Endothelial cell of umbilical vein (primary cell): ENCODE measurements at regions of chr20 and their contacts with region 1.

Region 1: DNA sequence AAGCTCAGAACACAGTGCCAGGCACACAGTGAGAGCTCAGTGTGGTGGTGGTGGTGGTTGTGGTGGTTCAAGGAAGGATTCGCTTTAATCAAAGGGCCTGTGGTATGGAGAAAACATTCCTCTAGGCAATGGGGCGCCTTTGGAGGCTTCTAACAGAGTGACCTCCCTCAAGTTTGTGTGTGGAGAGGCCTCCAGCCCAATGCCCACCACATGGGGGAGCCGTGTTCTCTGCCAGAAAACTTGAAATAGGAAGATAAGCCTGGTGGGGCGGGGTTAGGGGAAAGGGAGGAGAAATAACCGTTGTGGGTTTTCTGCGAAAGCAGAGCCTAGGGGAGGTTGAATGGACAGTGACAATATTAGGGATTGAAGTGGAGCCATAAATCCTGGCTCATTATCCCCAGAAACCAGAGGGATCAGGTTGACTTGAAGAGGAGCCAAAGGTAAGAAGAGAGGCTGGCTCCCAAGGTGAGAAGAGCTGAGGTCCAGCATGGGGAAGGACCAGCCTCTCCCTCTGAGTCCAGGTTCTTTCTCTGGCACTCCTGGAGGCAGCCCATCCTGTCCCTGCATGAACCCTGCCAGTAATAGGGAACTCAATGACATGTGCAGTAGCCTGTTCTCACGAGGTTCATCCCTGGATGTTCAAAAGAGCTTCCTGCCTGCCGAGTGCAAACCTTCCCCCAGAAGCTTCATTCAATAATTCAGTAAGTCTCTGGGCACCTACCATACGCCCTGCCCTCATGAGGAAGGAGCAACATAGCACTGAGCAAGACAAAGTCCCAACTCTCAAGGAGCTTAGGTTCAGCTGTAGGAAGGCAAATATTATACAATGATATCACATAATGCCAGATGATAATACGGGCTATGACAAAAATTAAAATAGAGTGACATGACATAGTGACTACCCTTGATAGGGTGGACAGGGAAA is 51.4 kb downstream of the TGM2 start:
- DNase-seq: no peak
- H3K4me3 ChIP-seq: no peak overlapping the region
- H3K27ac ChIP-seq: peak overlapping the region; percentile 10
- H3K4me1 ChIP-seq: peaks cover 61% of the 10 kb centered on the region
- H3K27me3 ChIP-seq: no peaks in the 10 kb centered on the region
- CTCF ChIP-seq: peak; percentile 27 to 50
- POLR2A ChIP-seq: no peak

Region 2: DNA sequence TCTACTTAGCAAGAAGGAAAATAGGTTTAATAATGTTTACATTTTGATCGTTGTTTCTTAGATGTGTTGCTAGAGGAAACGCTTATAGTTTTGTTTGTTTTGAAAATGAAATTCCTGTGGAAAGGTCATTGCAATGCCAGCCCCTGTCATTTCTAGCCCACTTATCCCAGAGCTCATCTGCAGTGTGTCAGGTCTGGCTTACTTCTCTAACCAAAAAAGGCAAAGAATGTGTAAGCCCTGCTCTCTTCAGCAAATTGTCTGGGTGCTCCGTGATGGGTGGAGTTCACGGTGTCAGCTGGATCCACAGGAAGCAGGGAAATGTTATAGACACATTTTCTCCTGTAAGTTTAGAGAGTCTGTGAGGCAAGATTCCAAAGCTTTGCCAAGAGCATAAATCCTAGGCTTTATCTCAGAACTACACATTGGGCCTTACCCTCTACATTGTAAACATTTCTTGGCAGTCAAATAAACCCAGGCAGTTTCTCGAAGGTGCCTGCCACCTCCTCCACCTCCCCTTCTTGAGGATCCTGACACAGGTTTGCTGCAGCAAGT is 29.2 kb before region 1 on chr20:
- CTCF ChIA-PET with region 1: interaction called, 10 read pairs
- POLR2A ChIA-PET with region 1: interaction called, 6 read pairs
- dilution Hi-C with region 1: no loop called
- intact Hi-C with region 1: loop called (anchors 2 kb)
- DNase-seq: peak; percentile 91
- H3K4me3 ChIP-seq: no peak overlapping the region
- H3K27ac ChIP-seq: peak overlapping the region; percentile 63
- H3K4me1 ChIP-seq: peaks cover 21% of the 10 kb centered on the region
- H3K27me3 ChIP-seq: no peaks in the 10 kb centered on the region
- CTCF ChIP-seq: no peak
- POLR2A ChIP-seq: no peak

Region 3: DNA sequence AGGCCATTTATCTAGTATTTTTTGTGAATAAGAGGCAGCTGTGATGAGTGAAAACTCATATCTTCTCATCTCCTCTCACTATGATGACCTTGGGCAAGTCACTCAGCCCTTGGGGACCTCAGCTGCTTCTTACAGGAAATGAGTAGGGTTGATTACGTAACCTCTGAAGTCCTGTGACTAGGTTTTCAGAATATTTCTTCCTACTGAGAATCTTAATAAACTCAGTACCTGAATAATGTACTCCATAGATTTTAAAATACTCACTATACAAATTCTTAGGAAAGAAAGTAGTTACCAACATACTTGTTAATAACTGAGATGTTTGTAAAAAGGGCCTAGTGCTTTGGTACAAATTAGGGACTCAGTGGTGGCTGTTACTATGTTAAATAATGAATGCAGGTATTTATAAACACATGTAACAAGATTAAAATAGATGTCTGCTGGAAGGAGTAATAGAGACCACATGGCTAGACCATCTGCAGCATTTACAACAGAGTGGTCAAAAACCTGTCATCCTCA is 19.2 kb before region 1 on chr20:
- CTCF ChIA-PET with region 1: interaction called, 11 read pairs
- POLR2A ChIA-PET with region 1: interaction called, 7 read pairs
- dilution Hi-C with region 1: no loop called
- intact Hi-C with region 1: no loop called
- DNase-seq: peak; percentile 72
- H3K4me3 ChIP-seq: no peak overlapping the region
- H3K27ac ChIP-seq: peak overlapping the region; percentile 74
- H3K4me1 ChIP-seq: peaks cover 44% of the 10 kb centered on the region
- H3K27me3 ChIP-seq: no peaks in the 10 kb centered on the region
- CTCF ChIP-seq: no peak
- POLR2A ChIP-seq: no peak

Region 4: DNA sequence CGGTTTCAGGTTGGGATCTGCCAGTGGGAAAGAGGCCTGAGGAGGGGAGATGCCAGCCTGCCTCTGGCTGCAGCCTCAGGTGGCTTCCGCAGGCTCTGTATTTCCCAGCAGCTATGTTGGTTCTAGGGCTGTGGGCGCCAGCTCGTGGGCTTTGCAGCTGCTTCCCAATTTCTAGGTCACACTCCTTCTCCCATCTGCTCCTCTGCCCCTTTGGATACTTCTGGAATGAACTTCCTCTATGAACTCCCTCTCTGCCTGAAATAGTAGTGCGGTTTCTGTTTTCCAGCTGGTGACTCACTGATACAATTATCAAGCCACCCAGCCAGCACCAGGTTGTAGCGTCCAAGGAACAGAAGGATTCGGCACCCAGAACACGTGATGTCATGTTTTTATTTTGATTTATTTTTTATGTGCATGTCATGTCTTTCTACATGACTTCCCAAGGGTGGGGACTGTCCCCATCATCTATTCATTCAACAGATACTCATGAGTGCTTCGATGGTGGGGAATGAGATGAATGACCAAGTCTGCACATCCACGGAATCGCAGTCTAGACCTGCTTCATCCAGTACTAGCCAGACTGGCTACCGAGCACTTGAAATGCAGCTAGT is 13.5 kb after region 1 on chr20:
- CTCF ChIA-PET with region 1: interaction called, 24 read pairs
- POLR2A ChIA-PET with region 1: no interaction called
- dilution Hi-C with region 1: no loop called
- intact Hi-C with region 1: loop called (anchors 1 kb)
- DNase-seq: peak; percentile 96
- H3K4me3 ChIP-seq: no peak overlapping the region
- H3K27ac ChIP-seq: peak overlapping the region; percentile 60
- H3K4me1 ChIP-seq: peaks cover 52% of the 10 kb centered on the region
- H3K27me3 ChIP-seq: no peaks in the 10 kb centered on the region
- CTCF ChIP-seq: no peak
- POLR2A ChIP-seq: peak; percentile 40

Region 5: GRCh38 chr20:38134387-38135270 is 21.0 kb after region 1 on chr20:
- CTCF ChIA-PET with region 1: interaction called, 12 read pairs
- POLR2A ChIA-PET with region 1: no interaction called
- dilution Hi-C with region 1: no loop called
- intact Hi-C with region 1: no loop called
- DNase-seq: peak; percentile 94
- H3K4me3 ChIP-seq: no peak overlapping the region
- H3K27ac ChIP-seq: peak overlapping the region; percentile 88
- H3K4me1 ChIP-seq: peaks cover 50% of the 10 kb centered on the region
- H3K27me3 ChIP-seq: no peaks in the 10 kb centered on the region
- CTCF ChIP-seq: no peak
- POLR2A ChIP-seq: peak; percentile 91

Region 6: DNA sequence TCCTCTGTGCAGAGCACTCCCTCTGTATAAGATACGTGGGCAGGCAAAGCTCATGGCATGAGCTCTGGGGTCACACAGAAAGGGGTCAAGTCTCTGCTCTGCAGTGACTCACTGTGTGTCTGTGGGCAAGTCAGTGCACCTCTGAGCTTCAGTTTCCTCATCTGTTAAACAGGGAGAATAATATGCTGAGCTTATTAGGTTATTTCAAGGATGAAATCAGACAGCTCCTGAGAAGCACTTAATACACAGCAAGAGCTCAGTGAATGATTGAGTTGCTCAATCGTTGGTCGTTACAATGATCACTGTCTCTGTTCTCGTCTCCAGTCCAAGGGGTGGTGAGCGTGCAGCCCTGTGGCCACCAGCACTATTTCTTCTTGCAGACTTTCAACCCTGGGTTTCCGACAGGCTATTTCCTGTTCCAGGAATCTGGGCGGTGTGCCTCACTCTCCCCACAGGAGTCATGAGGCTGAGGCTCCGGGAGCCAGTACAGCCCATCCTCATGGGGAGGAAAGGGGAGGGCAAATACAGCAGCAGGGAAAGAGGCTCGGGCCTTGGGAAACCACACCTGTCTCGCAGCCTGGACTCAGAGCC is 118.0 kb after region 1 on chr20:
- CTCF ChIA-PET with region 1: no interaction called
- POLR2A ChIA-PET with region 1: no interaction called
- dilution Hi-C with region 1: no loop called
- intact Hi-C with region 1: no loop called
- DNase-seq: peak; percentile 64
- H3K4me3 ChIP-seq: no peak overlapping the region
- H3K27ac ChIP-seq: no peak overlapping the region
- H3K4me1 ChIP-seq: peaks cover 10% of the 10 kb centered on the region
- H3K27me3 ChIP-seq: peaks cover 0 to 1% of the 10 kb centered on the region in 2 experiments
- CTCF ChIP-seq: no peak
- POLR2A ChIP-seq: no peak